Gastrocnemius medialis (tissue), 4 donors: ENCODE measurements at regions of chr2 and their contacts with region 1.

Region 1: DNA sequence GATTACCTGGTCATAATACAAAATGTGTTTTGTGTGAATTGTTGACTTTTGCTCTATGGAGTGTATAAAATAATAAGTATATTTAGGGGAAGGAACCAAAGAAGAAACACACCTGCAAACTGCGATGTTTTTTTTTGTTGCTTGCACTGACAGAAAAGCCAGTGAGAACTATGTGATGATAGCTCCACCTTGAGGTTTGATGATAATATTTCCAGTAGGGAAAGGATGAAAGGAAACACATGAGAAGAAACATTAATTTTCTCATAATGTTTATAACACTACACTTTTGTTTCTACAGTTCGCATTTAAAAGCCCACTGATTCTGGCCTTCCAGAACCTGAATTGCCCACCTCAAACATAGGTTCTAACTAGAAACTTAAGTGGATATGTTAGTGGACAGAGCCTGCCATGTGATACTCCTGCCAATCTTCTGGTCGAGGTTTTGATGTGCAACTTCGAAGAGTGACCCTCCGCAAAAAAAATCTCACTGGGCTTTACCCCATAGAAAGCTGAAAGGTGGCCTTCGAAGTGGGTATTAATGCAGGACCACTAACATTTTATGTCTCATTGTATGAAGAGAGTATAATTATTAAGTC is 476.4 kb upstream of the SPHKAP start:
- DNase-seq: no peak
- ATAC-seq: no peak
- H3K4me3 ChIP-seq: no peak overlapping the region
- H3K27ac ChIP-seq: no peak overlapping the region
- H3K4me1 ChIP-seq: no peaks in the 10 kb centered on the region
- H3K27me3 ChIP-seq: no peaks in the 10 kb centered on the region
- CTCF ChIP-seq: peak in 1 of 5 experiments; percentile 41
- POLR2A ChIP-seq: no peak

Region 2: DNA sequence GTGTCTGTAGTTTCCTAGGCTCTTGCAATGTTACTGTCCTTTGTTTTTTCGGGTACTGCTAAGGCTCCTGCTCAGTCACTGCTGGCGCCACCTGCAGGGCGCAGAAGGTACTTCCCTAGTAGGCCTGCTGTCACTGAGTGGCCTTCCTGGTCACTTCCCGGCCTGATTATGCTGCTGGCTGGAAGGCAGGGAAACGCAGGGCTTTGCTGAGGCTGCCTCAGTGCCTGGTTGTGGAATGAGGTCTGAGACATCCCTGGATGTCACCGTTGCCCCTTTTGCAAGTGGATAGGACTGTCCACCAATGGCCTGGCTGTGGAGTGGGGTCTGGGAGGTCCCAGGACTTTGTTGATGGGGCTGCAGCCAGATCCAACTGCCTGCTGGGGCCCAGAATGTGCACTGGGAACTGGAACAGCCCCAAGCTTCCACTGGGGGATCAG is 773.4 kb before region 1 on chr2:
- in situ Hi-C with region 1: loop called in 2 of 4 experiments (anchors 25 kb)
- intact Hi-C with region 1: no loop called
- DNase-seq: peak in 1 of 2 donors; percentile 27
- ATAC-seq: no peak
- H3K4me3 ChIP-seq: no peak overlapping the region
- H3K27ac ChIP-seq: no peak overlapping the region
- H3K4me1 ChIP-seq: no peaks in the 10 kb centered on the region
- H3K27me3 ChIP-seq: no peaks in the 10 kb centered on the region
- CTCF ChIP-seq: peak in 2 of 5 experiments; percentile 22 to 34
- POLR2A ChIP-seq: no peak

Region 3: GRCh38 chr2:227890495-227891079 is 767.3 kb before region 1 on chr2:
- in situ Hi-C with region 1: loop called in 2 of 4 experiments (anchors 25 kb)
- intact Hi-C with region 1: loop called (anchors 5 kb)
- DNase-seq: no peak
- ATAC-seq: peak; percentile 75
- H3K4me3 ChIP-seq: no peak overlapping the region
- H3K27ac ChIP-seq: no peak overlapping the region
- H3K4me1 ChIP-seq: no peaks in the 10 kb centered on the region
- H3K27me3 ChIP-seq: no peaks in the 10 kb centered on the region
- CTCF ChIP-seq: peak in 4 of 5 experiments; percentile 8 to 56 (median 41)
- POLR2A ChIP-seq: no peak

Region 4: DNA sequence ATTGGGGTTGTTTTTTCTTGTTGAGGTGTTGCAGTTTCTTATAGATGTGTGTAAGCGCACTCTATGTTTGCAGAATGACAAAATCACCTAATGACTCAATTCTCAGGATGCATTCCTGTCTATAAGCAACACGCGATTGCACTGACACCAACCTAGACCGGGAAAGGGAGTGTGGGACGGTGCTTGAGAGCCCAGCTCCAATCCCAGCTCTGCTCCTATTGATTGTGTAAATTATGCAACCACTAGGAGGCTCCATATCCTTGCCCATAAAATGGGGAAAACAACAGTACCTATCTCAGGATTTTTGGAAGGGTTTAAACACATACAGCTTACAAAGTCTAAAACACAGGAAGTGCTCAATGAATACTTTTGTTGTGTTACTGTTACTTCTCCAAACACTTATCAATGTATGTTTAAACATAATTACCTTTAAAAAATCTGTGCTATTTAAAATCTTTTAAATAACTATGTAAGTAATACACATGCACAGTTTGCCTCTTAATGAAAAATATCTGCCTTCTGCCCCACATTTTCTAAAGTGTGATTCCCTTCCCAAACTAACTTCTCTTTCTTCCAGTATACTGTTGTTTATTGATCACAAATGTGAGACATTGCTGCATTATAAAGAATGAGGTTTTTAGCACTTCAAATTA is 608.9 kb before region 1 on chr2:
- in situ Hi-C with region 1: no loop called
- intact Hi-C with region 1: loop called (anchors 10 kb)
- DNase-seq: no peak
- ATAC-seq: no peak
- H3K4me3 ChIP-seq: no peak overlapping the region
- H3K27ac ChIP-seq: no peak overlapping the region
- H3K4me1 ChIP-seq: no peaks in the 10 kb centered on the region
- H3K27me3 ChIP-seq: no peaks in the 10 kb centered on the region
- CTCF ChIP-seq: no peak
- POLR2A ChIP-seq: no peak

Region 5: DNA sequence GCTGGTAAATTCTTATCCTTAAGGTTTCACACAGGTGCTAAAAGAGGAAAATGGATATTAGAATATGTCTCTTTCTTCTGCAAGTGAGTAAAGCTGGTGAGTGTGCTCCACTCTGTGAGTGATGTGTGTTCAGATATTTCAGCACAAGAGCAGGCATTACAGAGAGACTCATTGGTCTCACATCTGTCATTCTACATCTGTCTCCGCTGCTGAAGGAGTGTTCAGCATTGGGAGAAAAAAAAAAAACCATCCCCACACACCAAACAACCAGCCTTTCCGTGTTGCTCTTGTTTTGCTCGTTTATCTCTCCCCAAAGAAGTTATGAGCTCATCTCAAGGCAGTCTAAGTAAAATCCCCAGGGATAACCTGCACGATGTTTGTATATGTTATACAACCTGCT is 192.5 kb before region 1 on chr2:
- in situ Hi-C with region 1: no loop called
- intact Hi-C with region 1: no loop called
- DNase-seq: no peak
- ATAC-seq: no peak
- H3K4me3 ChIP-seq: no peak overlapping the region
- H3K27ac ChIP-seq: no peak overlapping the region
- H3K4me1 ChIP-seq: no peaks in the 10 kb centered on the region
- H3K27me3 ChIP-seq: no peaks in the 10 kb centered on the region
- CTCF ChIP-seq: no peak
- POLR2A ChIP-seq: no peak